ENCODE measurements at regions of chr12 and their contacts with region 1.

Region 1: DNA sequence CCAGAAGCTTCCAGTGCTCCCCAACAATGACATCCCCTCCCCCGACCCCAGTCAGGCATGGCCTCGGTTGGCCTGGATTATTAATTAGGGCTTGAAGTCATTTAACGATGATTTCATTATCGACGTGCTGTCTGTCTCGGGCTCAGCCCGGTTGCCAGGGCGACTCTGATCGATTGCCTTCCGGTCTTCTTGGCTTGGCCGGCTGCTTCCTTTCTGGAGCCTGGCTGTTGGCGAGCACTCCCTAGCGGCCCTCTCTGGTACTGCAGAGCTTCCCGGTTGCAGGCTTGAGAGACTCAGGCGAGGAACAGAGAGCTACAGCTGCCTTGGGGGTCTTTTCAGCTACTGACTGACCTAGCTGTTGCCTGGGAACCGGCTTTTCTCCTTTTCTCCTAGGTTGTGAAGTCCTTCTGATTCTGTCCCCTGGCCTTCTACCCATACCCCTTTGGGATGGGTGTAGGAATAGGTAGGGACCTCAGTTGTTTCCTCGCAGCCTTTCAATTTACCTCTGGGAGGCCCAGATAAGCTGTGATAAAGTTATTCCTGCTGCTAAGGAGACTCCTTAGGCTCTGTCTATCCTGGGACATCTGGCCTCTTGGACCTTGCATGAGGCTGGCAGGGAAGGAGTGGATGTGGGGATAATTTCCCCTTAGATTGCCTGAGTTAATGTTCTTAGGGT is 5.5 kb upstream of the CISTR start:
- H3K4me3 ChIP-seq: peak overlapping the region; percentile 12
- H3K27ac ChIP-seq: no peak overlapping the region
- H3K4me1 ChIP-seq: peaks cover 16% of the 10 kb centered on the region
- CTCF ChIP-seq: peak; percentile 66

Region 2: GRCh38 chr12:53313996-53314395 is 443.2 kb before region 1 on chr12:
- CTCF ChIA-PET with region 1: no interaction called
- POLR2A ChIA-PET with region 1: no interaction called
- H3K4me3 ChIP-seq: no peak overlapping the region
- H3K27ac ChIP-seq: no peak overlapping the region
- H3K4me1 ChIP-seq: no peaks in the 10 kb centered on the region
- CTCF ChIP-seq: no peak

Region 3: DNA sequence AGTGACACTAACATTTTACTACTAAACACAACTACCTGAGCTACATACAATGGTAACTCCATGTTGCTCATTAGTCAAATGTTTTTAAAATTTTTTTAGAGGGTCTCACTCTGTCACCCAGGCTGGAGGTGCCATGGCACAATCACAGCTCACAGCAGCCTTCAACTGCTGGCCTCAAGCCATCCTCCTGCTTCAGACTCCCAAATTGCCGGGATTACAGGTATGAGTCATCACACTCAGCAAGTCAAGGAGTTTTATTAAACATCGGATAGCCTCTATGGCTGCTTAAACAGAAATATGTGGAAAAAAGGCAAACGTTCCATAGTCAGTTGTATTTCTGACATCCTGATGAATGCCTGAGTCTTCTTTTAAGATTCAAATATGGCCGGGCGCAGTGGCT is 238.9 kb before region 1 on chr12:
- CTCF ChIA-PET with region 1: no interaction called
- POLR2A ChIA-PET with region 1: no interaction called
- H3K4me3 ChIP-seq: no peak overlapping the region
- H3K27ac ChIP-seq: no peak overlapping the region
- H3K4me1 ChIP-seq: no peaks in the 10 kb centered on the region
- CTCF ChIP-seq: no peak

Region 4: DNA sequence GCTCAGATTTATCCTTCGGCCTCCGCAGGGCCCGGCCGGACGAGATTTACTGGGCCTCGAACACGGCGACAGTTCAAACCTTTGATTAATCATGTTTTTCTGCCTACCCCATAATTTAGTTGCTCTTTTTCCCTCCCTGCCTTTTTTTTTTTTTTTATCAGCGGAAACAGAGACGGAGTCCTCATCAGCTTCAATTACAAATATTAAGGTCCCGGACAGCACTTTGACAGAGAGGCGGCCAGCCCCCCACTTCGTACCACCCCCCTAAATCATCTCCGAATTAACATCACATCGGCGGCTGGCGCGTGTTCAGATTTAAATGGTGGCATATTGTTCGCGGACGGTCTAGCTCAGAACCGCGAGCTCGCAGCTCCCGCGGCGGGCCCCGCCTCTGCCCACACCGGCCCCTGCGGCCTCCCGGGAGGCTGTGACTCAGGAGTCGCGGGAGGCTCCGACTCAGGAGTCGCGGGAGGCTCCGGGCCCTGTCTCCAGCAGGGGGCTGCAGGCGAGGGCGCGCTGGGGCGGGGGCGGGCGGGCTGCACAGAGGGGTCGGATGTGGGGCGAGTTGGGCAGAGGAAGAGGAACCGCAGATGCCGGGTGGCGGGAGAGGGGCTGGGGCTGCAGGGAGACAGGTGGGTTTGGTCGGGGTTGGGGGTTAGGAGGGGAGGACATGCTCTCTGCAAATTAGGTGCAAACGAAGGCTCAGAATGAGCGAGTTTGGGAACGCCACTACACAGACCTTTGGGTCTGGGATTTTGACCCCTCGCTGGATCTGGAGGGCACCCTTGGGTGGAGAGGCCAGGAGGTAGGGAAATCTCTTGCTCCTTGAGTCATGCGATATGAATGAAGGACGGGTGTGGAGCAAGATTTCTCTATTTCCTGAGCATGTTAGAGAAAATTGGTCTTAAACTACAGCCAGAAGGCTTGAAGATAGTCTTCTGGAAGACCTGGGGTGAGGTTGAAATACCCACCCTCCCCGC is 61.8 kb before region 1 on chr12:
- CTCF ChIA-PET with region 1: interaction called, 11 read pairs
- POLR2A ChIA-PET with region 1: interaction called, 3 read pairs
- H3K4me3 ChIP-seq: peak overlapping the region; percentile 12
- H3K27ac ChIP-seq: peak overlapping the region; percentile 28; the same call in 1 of the 2 replicates
- H3K4me1 ChIP-seq: peaks cover 6% of the 10 kb centered on the region
- CTCF ChIP-seq: no peak

Region 5: DNA sequence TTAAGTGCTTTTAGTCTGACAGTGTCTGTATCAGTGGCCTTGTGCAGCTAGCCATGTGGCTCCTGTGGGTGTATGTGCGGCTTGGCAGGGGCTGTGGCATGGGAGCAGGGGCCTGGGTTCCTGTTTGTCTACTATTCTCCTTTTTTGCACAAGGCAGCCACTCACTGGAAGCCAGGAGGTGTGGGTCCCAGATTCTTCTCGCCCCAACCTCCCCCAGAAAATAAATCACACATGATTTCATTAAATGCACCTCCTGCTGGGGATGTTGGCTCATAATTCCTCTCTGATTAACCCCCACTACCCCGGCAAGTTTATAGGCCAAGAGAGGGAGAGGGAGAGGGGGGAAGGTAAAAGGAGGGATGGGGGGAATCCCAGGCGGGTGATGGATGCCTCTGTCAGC is 47.6 kb before region 1 on chr12:
- CTCF ChIA-PET with region 1: interaction called, 10 read pairs
- POLR2A ChIA-PET with region 1: no interaction called
- H3K4me3 ChIP-seq: no peak overlapping the region
- H3K27ac ChIP-seq: no peak overlapping the region; the same call in 1 of the 2 replicates
- H3K4me1 ChIP-seq: peaks cover 14% of the 10 kb centered on the region
- CTCF ChIP-seq: no peak

Region 6: GRCh38 chr12:53775478-53776145 is 18.4 kb after region 1 on chr12:
- CTCF ChIA-PET with region 1: interaction called, 19 read pairs
- POLR2A ChIA-PET with region 1: no interaction called
- H3K4me3 ChIP-seq: no peak overlapping the region
- H3K27ac ChIP-seq: no peak overlapping the region
- H3K4me1 ChIP-seq: peaks cover 9% of the 10 kb centered on the region; the same call in 1 of the 2 replicates
- CTCF ChIP-seq: no peak

Region 7: GRCh38 chr12:53984901-53985709 is 227.9 kb after region 1 on chr12 and contains the start of gene HOXC10:
- CTCF ChIA-PET with region 1: interaction called, 15 read pairs
- POLR2A ChIA-PET with region 1: no interaction called
- H3K4me3 ChIP-seq: peak within 1 kb of the TSS; percentile 32
- H3K27ac ChIP-seq: peak within 1 kb of the TSS; percentile 90
- H3K4me1 ChIP-seq: peaks cover 25% of the 10 kb centered on the region
- CTCF ChIP-seq: peak; percentile 81

Region 8: DNA sequence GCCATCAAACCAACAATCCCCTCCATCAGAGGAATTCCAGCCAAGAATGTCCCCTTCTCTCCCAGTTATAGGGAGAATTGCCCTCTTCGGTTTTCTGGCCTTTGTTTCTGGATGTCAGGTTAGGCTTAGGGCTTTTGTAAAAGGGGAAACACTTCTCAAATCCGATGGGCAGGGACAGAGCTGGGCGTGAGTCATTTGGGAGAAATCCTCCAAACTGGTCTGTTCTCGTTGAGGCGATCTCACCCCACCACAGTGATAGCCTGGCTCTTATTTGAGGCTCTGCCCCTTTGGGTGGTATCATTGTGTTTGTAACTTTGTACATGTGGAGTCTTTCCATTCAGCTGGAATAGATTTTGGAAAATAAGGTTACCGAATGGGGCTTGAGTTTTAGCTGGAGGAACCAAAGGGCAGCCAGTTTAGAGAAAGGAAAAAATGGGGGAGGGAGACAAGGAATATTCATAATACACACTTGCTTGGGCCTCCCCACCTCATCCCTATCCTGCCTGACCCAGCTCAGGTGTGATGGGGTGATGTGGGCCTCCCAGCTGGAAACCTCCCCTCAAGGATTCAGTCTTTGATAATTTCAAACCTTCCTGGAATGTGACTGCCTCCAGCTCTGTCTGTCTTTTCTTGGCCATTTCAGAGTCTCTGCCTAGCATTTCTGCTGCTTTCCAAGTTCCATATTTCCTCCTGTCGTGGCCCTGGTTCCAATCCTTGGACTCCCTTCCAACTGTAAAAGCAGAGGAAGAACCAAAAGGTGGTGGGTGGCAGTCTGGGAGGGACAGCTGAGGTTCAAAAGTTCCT is 303.9 kb after region 1 on chr12:
- CTCF ChIA-PET with region 1: no interaction called
- POLR2A ChIA-PET with region 1: no interaction called
- H3K4me3 ChIP-seq: no peak overlapping the region
- H3K27ac ChIP-seq: no peak overlapping the region
- H3K4me1 ChIP-seq: peaks cover 36% of the 10 kb centered on the region
- CTCF ChIP-seq: no peak

Measured in HEK293 (cell line).